ENCODE measurements at regions of chr18 and their contacts with region 1.

Region 1: GRCh38 chr18:57422313-57422872 is 12.8 kb upstream of the ONECUT2 start:
- DNase-seq: no peak
- ATAC-seq: no peak
- H3K4me3 ChIP-seq: no peak overlapping the region
- H3K27ac ChIP-seq: no peak overlapping the region
- H3K4me1 ChIP-seq: peaks cover 0 to 2% (median 0%) of the 10 kb centered on the region in 12 donors
- H3K27me3 ChIP-seq: peaks cover under 1 to 74% (median 50%) of the 10 kb centered on the region in 9 donors
- CTCF ChIP-seq: no peak
- POLR2A ChIP-seq: no peak

Region 2: GRCh38 chr18:57455576-57456129 is 33.3 kb after region 1 on chr18:
- intact Hi-C with region 1: loop called in 1 of 10 experiments (anchors 5 kb)
- DNase-seq: no peak
- ATAC-seq: no peak
- H3K4me3 ChIP-seq: no peak overlapping the region
- H3K27ac ChIP-seq: no peak overlapping the region
- H3K4me1 ChIP-seq: no peaks in the 10 kb centered on the region
- H3K27me3 ChIP-seq: peaks cover 0 to 41% (median 3%) of the 10 kb centered on the region in 9 donors
- CTCF ChIP-seq: no peak
- POLR2A ChIP-seq: no peak

Measured in heart left ventricle (tissue), 16 donors.